Breast epithelium (tissue), 4 donors: ENCODE measurements at regions of chr9 and their contacts with region 1.

Region 1: GRCh38 chr9:29669613-29670012 is 2096.3 kb upstream of the C9orf72 start:
- DNase-seq: no peak
- H3K4me3 ChIP-seq: no peak overlapping the region
- H3K27ac ChIP-seq: no peak overlapping the region
- H3K4me1 ChIP-seq: no peaks in the 10 kb centered on the region
- H3K27me3 ChIP-seq: no peaks in the 10 kb centered on the region
- CTCF ChIP-seq: no peak
- POLR2A ChIP-seq: no peak

Region 2: DNA sequence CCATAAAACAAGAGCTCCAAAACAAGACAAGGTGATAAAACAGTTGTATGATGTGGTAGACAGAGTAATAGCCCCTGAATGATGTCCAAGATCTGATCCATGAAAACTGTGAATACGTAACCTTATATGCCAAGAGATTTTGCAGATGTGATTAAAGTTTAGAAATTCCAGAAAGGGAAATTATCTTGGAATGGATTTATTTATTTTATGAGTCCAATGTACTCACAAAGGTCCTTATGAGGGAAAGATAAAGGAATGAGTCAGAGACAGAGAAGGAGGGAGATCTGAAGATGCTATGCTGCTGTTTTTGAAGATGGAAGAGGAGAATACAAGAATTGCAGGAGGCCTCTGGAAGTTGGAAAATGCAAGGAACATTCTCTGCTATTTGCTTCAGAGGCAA is 320.6 kb before region 1 on chr9:
- intact Hi-C with region 1: loop called (anchors 5 kb)
- DNase-seq: no peak
- H3K4me3 ChIP-seq: no peak overlapping the region
- H3K27ac ChIP-seq: no peak overlapping the region
- H3K4me1 ChIP-seq: no peaks in the 10 kb centered on the region
- H3K27me3 ChIP-seq: no peaks in the 10 kb centered on the region
- CTCF ChIP-seq: no peak
- POLR2A ChIP-seq: no peak

Region 3: GRCh38 chr9:29826421-29826820 is 156.8 kb after region 1 on chr9:
- intact Hi-C with region 1: no loop called
- DNase-seq: no peak
- H3K4me3 ChIP-seq: no peak overlapping the region
- H3K27ac ChIP-seq: no peak overlapping the region
- H3K4me1 ChIP-seq: no peaks in the 10 kb centered on the region
- H3K27me3 ChIP-seq: no peaks in the 10 kb centered on the region
- CTCF ChIP-seq: no peak
- POLR2A ChIP-seq: no peak